BJ (cell line): ENCODE measurements at regions of chr9 and their contacts with region 1.

Region 1: DNA sequence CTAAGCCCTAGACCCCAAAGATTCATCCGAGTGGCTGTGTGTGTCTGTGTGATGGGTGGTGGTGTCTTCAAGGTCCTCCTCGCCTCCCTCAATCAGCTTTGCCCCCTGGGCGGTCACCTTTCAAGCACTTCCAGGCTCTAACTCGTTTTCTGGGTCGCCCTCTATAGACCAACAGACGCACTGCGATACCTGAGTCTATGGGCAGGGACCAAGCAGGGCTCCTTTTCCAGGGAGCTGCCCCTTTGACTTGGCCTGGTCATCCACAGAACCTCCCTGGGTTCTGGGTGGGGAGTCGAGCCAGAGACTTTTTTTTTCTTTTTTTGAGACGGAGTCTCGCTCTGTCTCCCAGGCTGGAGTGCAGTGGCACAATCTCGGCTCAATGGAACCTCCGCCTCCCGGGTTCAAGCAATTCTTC is 1.1 kb downstream of the SLC27A4 start:
- DNase-seq: no peak
- H3K4me3 ChIP-seq: peak overlapping the region; percentile 68
- H3K27me3 ChIP-seq: no peaks in the 10 kb centered on the region
- CTCF ChIP-seq: peak; percentile 74

Region 2: GRCh38 chr9:128304149-128304974 is 37.1 kb before region 1 on chr9:
- CTCF ChIA-PET with region 1: interaction called, 14 read pairs
- POLR2A ChIA-PET with region 1: interaction called, 4 read pairs
- DNase-seq: no peak
- H3K4me3 ChIP-seq: no peak overlapping the region
- H3K27me3 ChIP-seq: no peaks in the 10 kb centered on the region
- CTCF ChIP-seq: no peak

Region 3: DNA sequence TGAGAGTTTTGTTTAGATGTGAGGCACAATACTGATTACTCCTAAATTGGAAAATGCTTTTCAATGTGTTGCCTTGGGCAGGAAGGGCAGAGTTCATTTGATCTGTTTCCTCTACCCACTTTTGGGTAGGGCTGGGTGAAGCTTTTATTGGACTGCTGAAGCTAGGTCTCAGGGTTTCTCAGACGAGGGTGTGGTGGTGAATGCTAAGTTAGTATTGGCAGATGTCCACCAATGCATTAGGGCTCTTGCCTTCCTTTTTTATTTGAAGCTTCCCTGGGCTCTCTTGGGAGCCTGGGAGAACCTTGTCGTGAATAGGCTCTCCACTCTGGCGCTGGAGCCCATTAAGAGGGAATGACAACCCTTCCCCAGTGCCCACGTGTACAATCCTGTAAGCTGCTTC is 234.0 kb after region 1 on chr9:
- CTCF ChIA-PET with region 1: no interaction called
- POLR2A ChIA-PET with region 1: no interaction called
- DNase-seq: no peak
- H3K4me3 ChIP-seq: no peak overlapping the region
- H3K27me3 ChIP-seq: no peaks in the 10 kb centered on the region
- CTCF ChIP-seq: no peak